Activated T-helper 2 cell treated with anti-CD3 and anti-CD28 coated beads, Interferon-gamma antibody, Interleukin-2, Interleukin-4, amounts not matched to agents 10 μg/mL and 5 μg/mL and 100 μg/mL, durations not matched to agents 14 hours and 24 hours and 36 hours (primary cell): ENCODE measurements at regions of chr3 and their contacts with region 1.

Region 1: DNA sequence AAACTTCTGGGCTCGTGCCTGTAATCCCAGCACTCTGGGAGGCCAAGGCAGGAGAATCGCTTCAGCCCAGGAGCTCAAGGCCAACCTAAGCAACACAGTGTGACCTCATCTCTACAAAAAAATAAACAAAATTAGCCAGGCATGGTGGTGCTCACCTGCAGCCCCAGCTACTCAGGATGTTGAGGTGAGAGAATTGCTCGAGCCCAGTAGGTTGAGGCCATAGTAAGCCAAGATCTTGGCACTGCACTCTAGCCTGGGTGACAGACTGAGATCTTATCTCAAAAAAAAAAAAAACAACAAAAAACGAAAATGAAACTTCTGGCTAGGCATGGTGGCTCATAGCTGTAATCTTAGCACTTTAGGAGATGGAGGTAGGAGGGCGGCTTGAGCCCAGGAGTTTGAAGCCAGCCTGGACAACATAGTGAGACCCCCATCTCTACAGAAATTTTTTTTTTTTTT is 53.7 kb downstream of the PIK3CB start:
- DNase-seq: peak; percentile 65
- H3K4me3 Mint-ChIP-seq: no peak overlapping the region
- H3K27ac Mint-ChIP-seq: peak overlapping the region; percentile 42
- H3K4me1 Mint-ChIP-seq: peaks cover 17% of the 10 kb centered on the region
- H3K27me3 Mint-ChIP-seq: no peaks in the 10 kb centered on the region

Region 2: DNA sequence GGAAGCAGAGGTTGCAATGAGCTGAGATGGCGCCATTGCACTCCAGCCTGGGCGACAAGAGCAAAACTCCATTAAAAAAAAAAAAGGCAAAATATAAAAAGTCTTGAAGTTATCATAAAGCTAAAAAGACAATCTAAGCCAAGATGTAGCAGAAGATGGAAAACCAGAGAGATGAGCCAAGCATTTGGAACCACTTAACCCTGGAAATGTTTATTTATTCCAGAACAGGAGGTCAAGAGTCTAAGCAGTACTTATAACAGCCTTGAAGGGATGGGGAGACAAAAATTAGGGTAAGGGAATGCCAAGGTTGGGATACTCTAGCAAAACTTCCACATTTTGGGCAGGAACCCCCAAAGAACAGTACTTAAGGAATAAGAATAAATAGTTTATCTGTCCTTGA is 142.4 kb before region 1 on chr3:
- intact Hi-C with region 1: no loop called
- DNase-seq: no peak
- H3K4me3 Mint-ChIP-seq: no peak overlapping the region
- H3K27ac Mint-ChIP-seq: no peak overlapping the region
- H3K4me1 Mint-ChIP-seq: no peaks in the 10 kb centered on the region
- H3K27me3 Mint-ChIP-seq: no peaks in the 10 kb centered on the region

Region 3: DNA sequence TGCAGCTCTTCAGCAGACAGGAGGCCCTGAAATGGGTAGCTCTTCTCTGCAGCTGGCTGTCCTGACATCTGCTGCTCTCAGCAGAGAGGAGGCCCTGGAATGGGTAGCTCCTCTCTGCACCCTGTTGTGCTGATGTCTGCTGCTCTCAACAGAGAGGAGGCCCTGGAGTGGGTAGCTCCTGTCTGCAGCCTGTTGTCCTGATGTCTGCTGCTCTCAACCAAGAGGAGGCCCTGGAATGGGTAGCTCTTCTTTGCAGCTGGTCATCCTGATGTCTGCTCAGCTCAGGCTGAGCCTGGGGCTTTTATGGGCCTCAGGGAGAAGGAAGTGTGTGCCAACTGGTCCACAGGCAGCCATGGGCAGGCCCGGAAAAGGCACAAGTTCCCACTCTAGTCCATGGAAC is 12.9 kb before region 1 on chr3:
- intact Hi-C with region 1: loop called (anchors 1 kb)
- DNase-seq: no peak
- H3K4me3 Mint-ChIP-seq: no peak overlapping the region
- H3K27ac Mint-ChIP-seq: no peak overlapping the region
- H3K4me1 Mint-ChIP-seq: peaks cover 3% of the 10 kb centered on the region
- H3K27me3 Mint-ChIP-seq: no peaks in the 10 kb centered on the region